Activated CD4-positive, alpha-beta memory T cell treated with anti-CD3 and anti-CD28 coated beads, Interleukin-2, amount 10 ng/mL, durations not matched to agents 7 days and 5 days (primary cell): ENCODE measurements at regions of chr19 and their contacts with region 1.

Region 1: GRCh38 chr19:56121180-56122167 is at the start of gene ZNF787:
- DNase-seq: peak; percentile 96
- H3K4me3 Mint-ChIP-seq: peak within 1 kb of the TSS; percentile 89
- H3K27ac Mint-ChIP-seq: peak within 1 kb of the TSS; percentile 93
- H3K4me1 Mint-ChIP-seq: peaks cover 36% of the 10 kb centered on the region
- H3K27me3 Mint-ChIP-seq: no peaks in the 10 kb centered on the region
- total RNA-seq, gene ZNF787: 30.0 to 31.1 TPM

Region 2: DNA sequence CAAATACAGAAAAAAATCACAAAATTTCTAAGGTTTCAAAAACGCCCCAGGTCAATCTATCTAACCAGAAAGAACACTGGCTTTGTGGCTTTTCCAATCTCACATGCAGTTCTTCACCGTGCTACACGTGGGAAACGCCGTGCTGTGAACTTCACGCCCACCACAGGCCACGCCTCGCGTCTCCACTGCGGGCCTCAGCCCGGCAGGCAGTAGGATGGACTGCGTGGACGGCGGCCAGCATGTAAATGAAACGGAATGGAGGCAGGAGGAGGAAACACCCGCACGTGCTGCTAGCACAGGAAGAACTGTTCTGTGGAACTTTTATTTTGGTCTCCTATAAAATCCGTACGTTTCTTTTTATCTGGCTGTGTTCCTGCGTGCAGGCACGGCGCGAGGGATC is 24.2 kb before region 1 on chr19:
- CTCF ChIA-PET with region 1: no interaction called
- POLR2A ChIA-PET with region 1: no interaction called
- DNase-seq: no peak
- H3K4me3 Mint-ChIP-seq: no peak overlapping the region
- H3K27ac Mint-ChIP-seq: no peak overlapping the region
- H3K4me1 Mint-ChIP-seq: peaks cover 7% of the 10 kb centered on the region
- H3K27me3 Mint-ChIP-seq: no peaks in the 10 kb centered on the region

Region 3: DNA sequence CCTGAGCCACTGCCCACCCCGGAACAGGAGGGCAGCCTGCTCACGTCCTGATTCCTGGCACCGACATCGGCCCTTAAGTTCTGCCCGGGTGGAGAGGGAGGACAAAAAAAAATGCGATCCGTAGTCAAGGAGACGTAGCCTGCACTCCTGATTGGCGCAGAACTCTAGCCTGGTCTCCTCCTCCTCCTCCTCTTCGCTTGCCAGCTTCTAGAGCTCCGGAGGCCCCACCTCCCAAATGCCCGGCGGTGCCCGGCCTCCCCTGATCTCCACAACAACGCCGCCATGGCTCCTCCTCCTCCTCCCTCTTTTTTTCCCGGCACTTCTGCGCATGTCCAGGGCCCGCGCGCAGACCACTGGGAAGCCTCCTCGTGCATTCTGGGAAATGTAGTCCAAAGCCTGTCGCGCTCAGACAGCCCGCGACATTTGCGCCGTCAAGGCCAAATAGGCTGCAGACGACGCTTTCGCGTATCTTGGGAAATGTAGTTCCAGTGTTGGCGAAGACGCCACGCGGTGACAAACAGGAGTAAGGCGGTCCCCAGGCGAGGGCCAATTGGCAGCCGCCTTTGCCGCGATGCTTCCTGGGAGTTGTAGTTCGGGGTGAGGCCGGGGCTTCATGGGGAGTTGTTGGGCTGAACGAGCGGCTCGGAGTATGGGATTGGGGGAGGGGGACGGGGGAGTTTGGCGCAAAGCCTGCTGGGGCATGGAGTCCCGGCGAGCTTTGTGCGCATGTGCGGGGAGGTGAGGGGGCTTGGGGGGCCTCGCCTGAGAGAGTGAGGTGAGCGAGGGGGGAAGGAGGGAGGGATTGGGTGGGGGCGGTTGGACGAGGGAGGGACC is 19.3 kb after region 1 on chr19 and contains the start of gene ZNF444:
- CTCF ChIA-PET with region 1: no interaction called
- POLR2A ChIA-PET with region 1: interaction called, 20 read pairs
- DNase-seq: peak; percentile 99
- H3K4me3 Mint-ChIP-seq: peak within 1 kb of the TSS; percentile 76
- H3K27ac Mint-ChIP-seq: peak within 1 kb of the TSS; percentile 83
- H3K4me1 Mint-ChIP-seq: peaks cover 40% of the 10 kb centered on the region
- H3K27me3 Mint-ChIP-seq: no peaks in the 10 kb centered on the region
- total RNA-seq, gene ZNF444: 25.7 to 26.3 TPM